Heart left ventricle (tissue), 16 donors: ENCODE measurements at regions of chr18 and their contacts with region 1.

Region 1: DNA sequence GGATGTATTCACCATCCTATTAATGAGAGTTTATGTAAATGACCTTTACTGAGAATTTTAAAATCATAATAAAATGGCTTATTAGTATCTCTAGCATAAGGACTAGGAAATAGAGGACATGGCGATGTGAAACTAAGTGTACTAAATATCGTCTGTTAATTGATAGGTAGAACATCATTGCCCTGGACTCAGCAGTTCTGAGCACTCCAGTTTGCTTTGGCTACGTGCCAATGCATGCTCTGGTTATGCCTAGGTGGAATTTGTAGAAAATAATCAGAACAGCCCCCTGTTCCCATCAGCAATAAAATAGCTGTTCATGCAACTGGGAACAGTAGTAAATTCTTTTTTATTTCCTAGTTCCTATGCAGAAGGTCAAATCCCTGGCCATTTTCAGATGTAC is 247.8 kb downstream of the DOK6 start:
- DNase-seq: no peak
- ATAC-seq: no peak
- H3K4me3 ChIP-seq: no peak overlapping the region
- H3K27ac ChIP-seq: no peak overlapping the region
- H3K4me1 ChIP-seq: no peaks in the 10 kb centered on the region
- H3K27me3 ChIP-seq: no peaks in the 10 kb centered on the region
- CTCF ChIP-seq: no peak
- POLR2A ChIP-seq: no peak

Region 2: DNA sequence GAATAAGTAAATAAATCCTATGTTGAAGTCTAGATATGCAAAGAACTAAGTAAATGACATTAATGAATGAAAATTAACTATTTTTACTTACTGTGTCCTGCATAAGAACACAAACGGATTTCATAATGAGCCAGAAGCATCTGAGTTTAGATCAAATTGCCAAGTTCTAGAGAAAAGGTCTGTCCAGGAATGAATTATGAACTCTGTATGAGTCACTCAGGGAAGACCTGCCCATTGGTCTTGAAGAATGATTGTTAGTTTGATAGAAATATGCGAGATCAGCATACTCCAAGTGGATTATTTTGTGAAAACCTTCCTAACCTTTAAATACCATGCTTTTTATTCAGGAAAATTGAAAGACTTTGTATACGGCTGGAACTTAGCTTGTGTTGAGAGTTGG is 58.3 kb before region 1 on chr18:
- intact Hi-C with region 1: loop called in 1 of 10 experiments (anchors 10 kb)
- DNase-seq: no peak
- ATAC-seq: no peak
- H3K4me3 ChIP-seq: no peak overlapping the region
- H3K27ac ChIP-seq: no peak overlapping the region
- H3K4me1 ChIP-seq: no peaks in the 10 kb centered on the region
- H3K27me3 ChIP-seq: no peaks in the 10 kb centered on the region
- CTCF ChIP-seq: no peak
- POLR2A ChIP-seq: no peak